Activated T-helper 2 cell treated with anti-CD3 and anti-CD28 coated beads, Interferon-gamma antibody, Interleukin-2, Interleukin-4, amounts not matched to agents 10 μg/mL and 5 μg/mL and 100 μg/mL, durations not matched to agents 14 hours and 24 hours and 36 hours (primary cell): ENCODE measurements at regions of chrX and their contacts with region 1.

Region 1: DNA sequence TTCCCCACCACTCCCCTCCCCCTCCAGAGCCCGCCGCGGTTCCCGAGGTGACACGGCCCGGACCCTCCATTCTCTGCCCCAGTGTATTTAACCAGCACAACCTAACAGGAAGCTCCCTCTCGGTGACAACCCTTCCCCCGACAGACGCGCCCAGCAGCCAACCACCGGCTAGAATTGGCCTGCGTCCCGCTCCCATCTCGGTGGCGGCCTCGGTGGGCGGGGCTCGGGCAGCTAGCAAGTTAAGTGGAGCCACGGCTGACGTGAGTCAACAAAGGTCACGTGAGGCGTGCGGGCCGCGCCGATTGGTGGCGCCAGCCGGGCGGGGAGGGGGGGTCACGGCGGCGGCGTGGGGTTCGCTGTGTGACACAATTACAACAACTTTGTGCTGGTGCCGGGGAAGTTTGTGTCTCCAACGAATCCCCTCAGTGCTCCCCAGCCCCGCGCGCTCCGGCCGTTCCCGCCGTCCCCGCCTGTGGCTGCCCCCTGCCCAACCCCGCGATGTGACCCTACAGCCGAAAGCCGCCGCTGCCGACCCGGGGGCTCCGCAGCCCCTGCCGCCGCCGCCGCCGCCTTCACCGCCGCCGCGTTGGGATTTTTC is at the start of gene KDM6A:
- DNase-seq: peak; percentile 92
- H3K4me3 Mint-ChIP-seq: peak within 1 kb of the TSS; percentile 95
- H3K27ac Mint-ChIP-seq: peak within 1 kb of the TSS; percentile 98
- H3K4me1 Mint-ChIP-seq: peaks cover 8% of the 10 kb centered on the region
- H3K27me3 Mint-ChIP-seq: no peaks in the 10 kb centered on the region
- total RNA-seq, gene KDM6A: 21.8 and 30.7 TPM in 2 replicates

Region 2: GRCh38 chrX:43654431-43655150 is 1218.3 kb before region 1 on chrX:
- intact Hi-C with region 1: loop called (anchors 10 kb)
- DNase-seq: peak; percentile 86
- H3K4me3 Mint-ChIP-seq: peak overlapping the region; percentile 97
- H3K27ac Mint-ChIP-seq: peak overlapping the region; percentile 100
- H3K4me1 Mint-ChIP-seq: peaks cover 17% of the 10 kb centered on the region
- H3K27me3 Mint-ChIP-seq: no peaks in the 10 kb centered on the region

Region 3: GRCh38 chrX:44945736-44946135 is 72.8 kb after region 1 on chrX:
- intact Hi-C with region 1: loop called (anchors 5 kb)
- DNase-seq: no peak
- H3K4me3 Mint-ChIP-seq: no peak overlapping the region
- H3K27ac Mint-ChIP-seq: no peak overlapping the region
- H3K4me1 Mint-ChIP-seq: peaks cover 7% of the 10 kb centered on the region
- H3K27me3 Mint-ChIP-seq: no peaks in the 10 kb centered on the region

Region 4: DNA sequence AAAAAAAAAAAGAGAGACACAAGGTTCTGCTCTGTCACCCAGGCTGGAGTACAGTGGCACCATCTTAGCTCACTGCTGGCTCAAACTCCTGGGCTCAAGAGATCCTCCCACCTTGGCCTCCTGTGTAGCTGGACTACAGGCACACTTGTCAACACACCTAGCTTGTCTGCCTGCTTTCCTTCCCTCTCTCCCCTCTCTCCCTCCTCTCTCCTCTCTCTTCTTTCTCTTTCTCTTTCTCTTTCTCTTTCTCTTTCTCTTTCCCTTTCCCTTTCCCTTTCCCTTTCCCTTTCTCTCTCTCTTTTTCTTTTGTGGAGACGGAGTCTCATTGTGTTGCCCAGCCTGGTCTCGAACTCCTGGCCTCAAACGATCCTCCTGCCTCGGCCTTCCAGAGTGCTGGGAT is 195.7 kb after region 1 on chrX:
- intact Hi-C with region 1: loop called (anchors 2 kb)
- DNase-seq: no peak
- H3K4me3 Mint-ChIP-seq: peak overlapping the region; percentile 61
- H3K27ac Mint-ChIP-seq: peak overlapping the region; percentile 83
- H3K4me1 Mint-ChIP-seq: peaks cover 25% of the 10 kb centered on the region
- H3K27me3 Mint-ChIP-seq: no peaks in the 10 kb centered on the region